ENCODE measurements at regions of chr20 and their contacts with region 1.

Region 1: DNA sequence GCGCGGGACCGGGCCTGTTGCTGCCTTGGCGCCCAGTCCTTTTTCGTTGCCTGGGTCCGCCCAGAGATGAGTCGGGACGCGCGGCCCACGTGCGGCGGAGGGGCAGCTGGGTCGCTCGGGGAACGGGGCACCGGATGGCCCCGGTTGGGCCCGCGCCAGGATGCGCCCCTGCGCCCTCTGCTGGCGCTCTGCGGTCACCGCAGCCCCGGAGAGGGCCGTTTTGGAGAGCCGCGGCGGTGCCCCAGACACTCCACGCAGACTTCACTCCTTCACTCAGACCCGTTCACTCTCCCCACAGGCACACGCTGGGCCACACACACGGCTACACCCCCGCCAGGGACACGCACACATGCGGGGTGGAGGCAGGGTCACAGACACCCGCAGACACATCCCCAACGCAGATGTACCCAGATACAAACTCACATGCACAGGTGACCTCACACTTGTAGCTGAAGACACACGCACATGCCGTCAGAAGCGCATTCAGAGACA is 38.8 kb downstream of the SRC start:
- DNase-seq: peak; percentile 83
- ATAC-seq: peak; percentile 88
- H3K4me3 ChIP-seq: peak overlapping the region; percentile 40
- H3K27ac ChIP-seq: no peak overlapping the region
- H3K4me1 ChIP-seq: peaks cover 3% of the 10 kb centered on the region
- H3K27me3 ChIP-seq: no peaks in the 10 kb centered on the region
- CTCF ChIP-seq: peak; percentile 88

Region 2: GRCh38 chr20:37276494-37277252 is 108.1 kb before region 1 on chr20:
- intact Hi-C with region 1: loop called (anchors 10 kb)
- DNase-seq: no peak
- ATAC-seq: peak; percentile 76
- H3K4me3 ChIP-seq: no peak overlapping the region
- H3K27ac ChIP-seq: no peak overlapping the region
- H3K4me1 ChIP-seq: peaks cover 22% of the 10 kb centered on the region
- H3K27me3 ChIP-seq: no peaks in the 10 kb centered on the region
- CTCF ChIP-seq: peak; percentile 30

Region 3: GRCh38 chr20:37915800-37916570 is 531.3 kb after region 1 on chr20:
- intact Hi-C with region 1: no loop called
- DNase-seq: no peak
- ATAC-seq: peak; percentile 40
- H3K4me3 ChIP-seq: no peak overlapping the region
- H3K27ac ChIP-seq: no peak overlapping the region
- H3K4me1 ChIP-seq: peaks cover 8% of the 10 kb centered on the region
- H3K27me3 ChIP-seq: peaks cover 32% of the 10 kb centered on the region
- CTCF ChIP-seq: no peak